ENCODE measurements at regions of chr12 and their contacts with region 1.

Region 1: GRCh38 chr12:45728630-45729232 is 775 bp upstream of the ARID2 start:
- DNase-seq: peak; percentile 96
- H3K4me3 Mint-ChIP-seq: peak overlapping the region; percentile 99
- H3K27ac Mint-ChIP-seq: peak overlapping the region; percentile 100
- H3K4me1 Mint-ChIP-seq: peaks cover 40% of the 10 kb centered on the region
- H3K27me3 Mint-ChIP-seq: no peaks in the 10 kb centered on the region

Region 2: GRCh38 chr12:45170456-45171042 is 558.2 kb before region 1 on chr12:
- intact Hi-C with region 1: loop called (anchors 1 kb)
- DNase-seq: peak; percentile 57
- H3K4me3 Mint-ChIP-seq: no peak overlapping the region
- H3K27ac Mint-ChIP-seq: no peak overlapping the region
- H3K4me1 Mint-ChIP-seq: no peaks in the 10 kb centered on the region
- H3K27me3 Mint-ChIP-seq: peaks cover 7% of the 10 kb centered on the region

Region 3: DNA sequence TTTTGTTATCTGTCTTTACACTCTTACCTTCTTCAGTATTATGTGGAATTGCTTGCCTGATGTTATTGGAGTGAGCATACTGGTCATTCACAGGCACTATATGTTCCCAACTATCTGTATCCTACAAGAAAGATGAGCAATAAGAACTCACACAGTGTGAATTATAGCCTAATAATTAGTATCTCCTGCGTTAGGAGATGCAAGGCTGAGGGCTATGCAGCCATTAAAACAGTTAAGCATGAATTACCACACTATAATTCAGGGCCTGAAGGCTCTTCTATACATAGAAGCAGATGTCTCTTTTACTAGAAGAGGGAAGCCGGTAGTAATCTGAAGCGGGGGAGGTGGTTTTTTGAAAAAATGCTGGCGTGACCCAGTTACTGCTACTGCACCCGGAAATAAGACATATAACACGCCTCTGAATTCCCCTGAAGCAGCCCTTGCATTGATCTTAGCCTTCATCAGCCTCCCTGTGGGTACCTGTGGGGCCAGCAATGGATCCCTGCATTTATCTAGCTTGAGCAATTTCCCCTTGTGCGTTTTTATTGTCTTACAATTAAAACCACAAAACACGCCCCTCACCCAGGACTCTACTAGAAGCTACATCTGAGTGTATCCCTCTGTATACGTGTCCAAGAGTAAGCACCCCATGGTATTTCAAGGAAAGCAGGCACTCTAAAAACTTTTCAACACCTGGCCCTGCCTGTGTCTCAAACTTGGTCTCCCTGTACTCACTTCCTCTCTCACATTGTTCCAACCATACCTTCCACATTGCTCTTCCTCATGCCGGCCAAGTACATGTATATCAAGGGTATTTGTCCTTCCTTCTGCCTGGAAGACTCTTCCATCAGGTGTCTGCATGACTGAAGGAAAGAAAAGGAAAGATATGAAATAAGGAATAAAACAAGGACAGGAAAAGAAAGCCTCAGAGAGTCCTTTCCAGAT is 210.2 kb before region 1 on chr12:
- intact Hi-C with region 1: loop called (anchors 1 kb)
- DNase-seq: peak; percentile 53
- H3K4me3 Mint-ChIP-seq: peak overlapping the region; percentile 33
- H3K27ac Mint-ChIP-seq: peak overlapping the region; percentile 86
- H3K4me1 Mint-ChIP-seq: peaks cover 13% of the 10 kb centered on the region
- H3K27me3 Mint-ChIP-seq: no peaks in the 10 kb centered on the region

Region 4: GRCh38 chr12:45655201-45655600 is 73.5 kb before region 1 on chr12:
- intact Hi-C with region 1: loop called (anchors 1 kb)
- DNase-seq: peak; percentile 34
- H3K4me3 Mint-ChIP-seq: no peak overlapping the region
- H3K27ac Mint-ChIP-seq: no peak overlapping the region
- H3K4me1 Mint-ChIP-seq: peaks cover 12% of the 10 kb centered on the region
- H3K27me3 Mint-ChIP-seq: peaks cover 19% of the 10 kb centered on the region

Region 5: DNA sequence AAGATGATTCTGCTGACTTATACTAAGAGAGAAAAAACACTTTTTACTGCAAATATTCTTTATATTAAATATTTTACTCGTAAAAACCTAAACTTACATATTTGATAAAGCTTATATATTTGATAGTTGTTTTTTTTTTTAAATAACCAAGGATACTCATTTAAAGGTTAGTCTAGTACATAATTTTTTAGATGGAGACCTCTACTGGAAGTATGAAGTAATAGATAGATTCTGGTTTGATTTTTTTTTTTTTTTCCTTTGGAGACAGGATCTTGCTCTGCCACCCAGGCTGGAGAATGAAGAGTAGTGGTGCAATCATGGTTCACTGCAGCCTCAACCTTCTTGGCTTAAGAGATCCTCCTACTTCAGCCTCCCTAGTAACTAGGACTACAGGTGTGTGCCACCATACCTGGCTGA is 17.1 kb after region 1 on chr12:
- intact Hi-C with region 1: loop called (anchors 2 kb)
- DNase-seq: no peak
- H3K4me3 Mint-ChIP-seq: no peak overlapping the region
- H3K27ac Mint-ChIP-seq: no peak overlapping the region
- H3K4me1 Mint-ChIP-seq: peaks cover 43% of the 10 kb centered on the region
- H3K27me3 Mint-ChIP-seq: no peaks in the 10 kb centered on the region

Region 6: GRCh38 chr12:46268590-46269558 is 540.1 kb after region 1 on chr12 and contains the start of gene SLC38A1:
- intact Hi-C with region 1: loop called (anchors 2 kb)
- DNase-seq: peak; percentile 85
- H3K4me3 Mint-ChIP-seq: no peak within 1 kb of the TSS
- H3K27ac Mint-ChIP-seq: no peak within 1 kb of the TSS
- H3K4me1 Mint-ChIP-seq: peaks cover 28% of the 10 kb centered on the region
- H3K27me3 Mint-ChIP-seq: no peaks in the 10 kb centered on the region
- total RNA-seq, gene SLC38A1: 172 and 182 TPM in 2 replicates